CD14-positive monocyte (primary cell): ENCODE measurements at regions of chr1 and their contacts with region 1.

Region 1: GRCh38 chr1:42335050-42335808 is at the start of gene FOXJ3:
- DNase-seq: peak; percentile 84 to 94 (median 90)
- H3K4me3 ChIP-seq: peak within 1 kb of the TSS; percentile 67 to 95 (median 90)
- H3K4me3 Mint-ChIP-seq: peak within 1 kb of the TSS; percentile 90 to 95
- H3K27ac ChIP-seq: peak within 1 kb of the TSS; percentile 66 to 86
- H3K27ac Mint-ChIP-seq: peak within 1 kb of the TSS; percentile 76 to 95 (median 89)
- H3K4me1 ChIP-seq: peaks cover 20 to 28% of the 10 kb centered on the region in 2 donors
- H3K4me1 Mint-ChIP-seq: peaks cover 38% of the 10 kb centered on the region
- H3K27me3 ChIP-seq: no peaks in the 10 kb centered on the region
- H3K27me3 Mint-ChIP-seq: peaks cover 0 to 4% (median 2%) of the 10 kb centered on the region in 3 donors
- CTCF ChIP-seq: no peak
- polyA plus RNA-seq, gene FOXJ3: 10.2 to 18.5 (median 18.4) TPM

Region 2: DNA sequence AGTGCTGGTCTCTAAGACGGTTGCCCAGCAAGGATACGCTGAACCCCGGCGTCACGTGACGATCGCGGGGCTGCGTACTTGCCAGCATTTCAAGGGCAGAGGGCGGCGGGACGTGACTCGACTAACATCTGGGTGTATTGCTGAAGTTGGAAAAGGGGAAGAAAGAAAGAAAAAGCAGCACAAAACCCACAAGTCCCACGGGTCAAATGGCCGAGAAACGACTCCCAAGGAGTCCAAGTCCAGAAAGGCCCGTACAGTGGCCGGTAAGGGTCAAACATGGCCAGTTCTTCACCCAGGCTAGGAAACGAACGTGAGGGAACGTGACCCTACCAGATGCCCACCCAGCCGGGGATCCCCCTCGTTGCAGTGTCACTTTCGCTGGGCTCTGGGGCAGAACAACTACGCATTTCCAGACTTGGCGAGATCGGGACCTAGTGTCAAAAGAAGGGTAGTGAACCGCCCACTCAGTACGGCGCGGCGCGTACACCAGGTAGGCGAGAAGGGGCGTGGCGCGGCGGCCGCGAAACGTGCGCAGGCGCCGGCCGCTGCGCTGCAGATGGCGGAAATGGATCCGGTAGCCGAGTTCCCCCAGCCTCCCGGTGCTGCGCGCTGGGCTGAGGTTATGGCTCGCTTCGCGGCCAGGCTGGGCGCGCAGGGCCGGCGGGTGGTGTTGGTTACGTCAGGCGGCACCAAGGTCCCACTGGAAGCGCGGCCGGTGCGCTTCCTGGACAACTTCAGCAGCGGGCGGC is 121.0 kb after region 1 on chr1 and contains the starts of genes PPCS and ZMYND12:
- intact Hi-C with region 1: loop called (anchors 2 to 10 kb)
- DNase-seq: peak; percentile 77 to 89 (median 86)
- H3K4me3 ChIP-seq: peak within 1 kb of the TSS; percentile 64 to 91 (median 89)
- H3K4me3 Mint-ChIP-seq: peak within 1 kb of the TSS; percentile 92 to 96
- H3K27ac ChIP-seq: peak within 1 kb of the TSS; percentile 74 to 92
- H3K27ac Mint-ChIP-seq: peak within 1 kb of the TSS; percentile 93 to 98 (median 95)
- H3K4me1 ChIP-seq: peaks cover 14 to 28% of the 10 kb centered on the region in 2 donors
- H3K4me1 Mint-ChIP-seq: peaks cover 22% of the 10 kb centered on the region
- H3K27me3 ChIP-seq: no peaks in the 10 kb centered on the region
- H3K27me3 Mint-ChIP-seq: peaks cover 0 to 1% (median 0%) of the 10 kb centered on the region in 3 donors
- CTCF ChIP-seq: no peak
- polyA plus RNA-seq, gene PPCS: 43.2 to 182 (median 176) TPM
- polyA plus RNA-seq, gene ZMYND12: 0.76 to 1.3 (median 1.2) TPM

Region 3: DNA sequence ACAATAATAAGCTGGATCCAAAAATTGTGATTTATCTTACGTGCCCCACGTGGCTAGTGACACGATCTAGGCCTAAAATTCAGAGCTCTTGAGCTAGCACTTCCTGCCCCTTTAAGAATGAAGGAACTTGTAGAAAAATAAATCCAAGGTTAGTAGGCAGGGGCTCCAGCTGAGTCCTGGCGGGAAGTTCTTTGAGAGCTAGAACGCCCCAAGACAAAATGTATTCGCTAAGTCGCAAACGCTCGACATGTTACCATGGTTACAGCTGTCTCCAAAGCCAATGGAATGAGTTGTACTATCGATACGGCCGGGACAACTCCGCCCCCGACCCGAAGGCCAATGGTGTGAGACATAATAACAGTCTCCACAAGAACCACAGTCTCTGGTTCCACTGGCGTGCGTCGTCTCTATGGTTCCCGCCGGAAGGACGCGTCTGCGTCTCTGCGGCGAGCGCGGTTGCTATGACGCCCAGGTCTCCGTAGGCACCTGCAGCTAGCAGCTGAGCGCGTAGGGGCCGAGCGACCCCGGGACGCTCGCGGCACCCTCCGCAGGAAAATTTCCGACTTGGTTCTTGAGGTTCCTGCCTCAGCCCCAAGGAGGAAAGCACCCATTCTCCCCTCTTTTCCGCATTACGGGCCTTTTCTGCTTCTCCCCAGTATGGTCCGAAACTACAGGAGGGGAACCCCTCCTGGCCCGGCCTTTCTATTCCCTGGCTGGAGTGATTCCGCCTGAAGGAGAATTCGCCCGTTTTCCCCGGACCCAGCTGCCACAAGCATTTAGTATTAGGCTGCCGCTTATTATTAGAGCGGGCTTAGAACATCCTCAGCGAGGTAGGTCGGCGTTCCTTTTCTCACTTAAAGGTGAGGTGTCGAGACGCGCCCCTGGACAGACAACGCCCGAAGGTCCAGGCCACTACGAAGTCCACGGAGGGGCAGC is 127.9 kb after region 1 on chr1 and contains the start of gene CCDC30:
- intact Hi-C with region 1: loop called in 1 of 2 experiments (anchors 10 kb)
- DNase-seq: peak; percentile 89 to 95 (median 94)
- H3K4me3 ChIP-seq: peak within 1 kb of the TSS; percentile 37 to 73 (median 68)
- H3K4me3 Mint-ChIP-seq: peak within 1 kb of the TSS; percentile 83 to 91
- H3K27ac ChIP-seq: peak within 1 kb of the TSS; percentile 20 to 34
- H3K27ac Mint-ChIP-seq: peak within 1 kb of the TSS in 6 of 7 donors; percentile 68 to 85 (median 82)
- H3K4me1 ChIP-seq: peaks cover 16 to 18% of the 10 kb centered on the region in 2 donors
- H3K4me1 Mint-ChIP-seq: peaks cover 28% of the 10 kb centered on the region
- H3K27me3 ChIP-seq: no peaks in the 10 kb centered on the region
- H3K27me3 Mint-ChIP-seq: peaks cover 0 to 2% (median 1%) of the 10 kb centered on the region in 3 donors
- CTCF ChIP-seq: no peak
- polyA plus RNA-seq, gene CCDC30: 0.95 to 1.5 (median 1.2) TPM

Region 4: GRCh38 chr1:42657971-42658879 is 323.0 kb after region 1 on chr1 and contains the start of gene PPIH:
- intact Hi-C with region 1: loop called in 1 of 2 experiments (anchors 10 kb)
- DNase-seq: peak; percentile 88 to 93 (median 89)
- H3K4me3 ChIP-seq: peak within 1 kb of the TSS; percentile 78 to 89 (median 84)
- H3K4me3 Mint-ChIP-seq: peak within 1 kb of the TSS; percentile 93 to 98
- H3K27ac ChIP-seq: peak within 1 kb of the TSS; percentile 57 to 82
- H3K27ac Mint-ChIP-seq: peak within 1 kb of the TSS; percentile 90 to 97 (median 91)
- H3K4me1 ChIP-seq: peaks cover 15 to 18% of the 10 kb centered on the region in 2 donors
- H3K4me1 Mint-ChIP-seq: peaks cover 20% of the 10 kb centered on the region
- H3K27me3 ChIP-seq: no peaks in the 10 kb centered on the region
- H3K27me3 Mint-ChIP-seq: peaks cover 0 to 5% (median 4%) of the 10 kb centered on the region in 3 donors
- CTCF ChIP-seq: no peak
- polyA plus RNA-seq, gene PPIH: 28.1 to 31.0 (median 28.8) TPM

Region 5: DNA sequence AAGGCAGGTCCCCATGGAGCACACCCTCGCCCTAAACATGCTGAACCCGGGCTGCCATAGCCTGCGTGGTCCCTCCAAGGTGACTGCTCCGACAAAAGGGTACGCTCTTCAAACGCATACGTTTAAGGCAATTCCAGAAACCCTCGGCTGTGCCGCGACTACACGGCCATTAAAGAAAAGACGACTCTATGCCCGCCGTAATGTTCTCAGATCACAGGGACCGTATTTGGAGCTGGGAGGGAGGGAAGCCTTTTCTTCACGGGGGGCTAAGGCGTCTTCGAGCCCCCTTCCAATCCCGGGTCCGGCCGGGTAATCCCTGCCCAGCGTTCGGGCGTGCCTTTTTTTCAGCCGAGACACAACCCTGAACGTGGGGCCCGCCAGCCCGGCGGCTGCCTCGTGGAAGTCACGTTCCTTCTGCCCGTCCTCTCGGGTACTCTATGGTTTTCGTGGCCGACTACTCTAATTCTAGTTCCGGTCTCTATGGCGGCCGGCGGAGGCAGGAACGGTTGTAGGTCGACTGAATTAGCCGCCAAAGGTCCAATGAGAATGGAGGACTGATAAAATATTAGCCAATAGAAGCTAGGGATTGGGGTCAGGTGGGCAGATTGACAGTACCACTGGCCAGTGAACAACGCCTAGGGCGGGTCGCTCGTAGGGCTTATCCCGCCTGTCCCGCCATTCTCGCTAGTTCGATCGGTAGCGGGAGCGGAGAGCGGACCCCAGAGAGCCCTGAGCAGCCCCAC is 346.7 kb after region 1 on chr1 and contains the start of gene YBX1:
- intact Hi-C with region 1: loop called in 1 of 2 experiments (anchors 10 kb)
- DNase-seq: peak; percentile 97 to 99 (median 97)
- H3K4me3 ChIP-seq: peak within 1 kb of the TSS; percentile 58 to 95 (median 85)
- H3K4me3 Mint-ChIP-seq: peak within 1 kb of the TSS; percentile 91 to 94
- H3K27ac ChIP-seq: peak within 1 kb of the TSS; percentile 78 to 92
- H3K27ac Mint-ChIP-seq: peak within 1 kb of the TSS; percentile 91 to 98 (median 96)
- H3K4me1 ChIP-seq: peaks cover 36 to 50% of the 10 kb centered on the region in 2 donors
- H3K4me1 Mint-ChIP-seq: peaks cover 49% of the 10 kb centered on the region
- H3K27me3 ChIP-seq: no peaks in the 10 kb centered on the region
- H3K27me3 Mint-ChIP-seq: no peaks in the 10 kb centered on the region
- CTCF ChIP-seq: no peak
- polyA plus RNA-seq, gene YBX1: 65.7 to 301 (median 70.2) TPM

Region 6: GRCh38 chr1:42747125-42747524 is 411.9 kb after region 1 on chr1:
- intact Hi-C with region 1: loop called in 1 of 2 experiments (anchors 10 kb)
- DNase-seq: peak in 2 of 3 donors; percentile 7 to 9
- H3K4me3 ChIP-seq: no peak overlapping the region
- H3K4me3 Mint-ChIP-seq: no peak overlapping the region
- H3K27ac ChIP-seq: peak overlapping the region in 1 of 2 donors; percentile 72
- H3K27ac Mint-ChIP-seq: peak overlapping the region in 2 of 7 donors; percentile 19 to 41
- H3K4me1 ChIP-seq: peaks cover 18% of the 10 kb centered on the region in 2 donors
- H3K4me1 Mint-ChIP-seq: peaks cover 28% of the 10 kb centered on the region
- H3K27me3 ChIP-seq: no peaks in the 10 kb centered on the region
- H3K27me3 Mint-ChIP-seq: peaks cover 0 to 6% (median 2%) of the 10 kb centered on the region in 3 donors
- CTCF ChIP-seq: peak; percentile 61

Region 7: DNA sequence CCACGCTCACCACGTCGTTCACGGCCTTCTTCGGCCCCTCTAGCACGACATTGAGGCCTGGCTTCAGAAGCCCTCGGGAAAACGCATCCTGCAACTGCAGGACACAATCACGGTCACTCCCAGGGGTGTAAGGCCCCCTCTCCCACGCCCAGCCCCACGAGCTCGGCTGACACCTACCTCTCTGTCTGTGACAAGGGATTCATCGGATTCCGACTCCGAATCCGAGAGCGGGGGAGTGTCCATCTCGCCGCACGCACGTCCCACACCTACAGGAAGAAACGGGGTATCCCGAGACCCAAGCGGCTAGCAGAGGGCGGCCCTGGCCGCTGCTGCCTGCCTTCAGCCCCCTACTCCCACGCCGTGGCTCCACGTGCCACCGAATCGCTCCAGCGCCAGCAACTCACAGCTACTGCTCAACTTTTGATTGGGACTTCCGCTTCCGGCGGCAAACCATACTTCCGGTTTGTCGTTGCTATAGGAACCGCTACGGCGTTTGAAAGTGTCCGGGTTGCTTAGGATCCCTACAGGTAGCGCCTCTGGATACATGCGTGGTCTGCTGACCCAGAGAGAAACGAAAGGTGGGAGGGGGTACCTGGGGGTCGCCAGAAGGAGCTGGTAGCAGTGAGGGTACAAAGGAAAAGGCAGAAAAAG is 836.8 kb after region 1 on chr1 and contains the starts of genes CFAP57 and EBNA1BP2:
- intact Hi-C with region 1: loop called in 1 of 2 experiments (anchors 2 kb)
- DNase-seq: peak; percentile 95
- H3K4me3 ChIP-seq: peak within 1 kb of the TSS; percentile 62 to 98 (median 80)
- H3K4me3 Mint-ChIP-seq: peak within 1 kb of the TSS; percentile 94 to 96
- H3K27ac ChIP-seq: peak within 1 kb of the TSS in 1 of 2 donors; percentile 71
- H3K27ac Mint-ChIP-seq: peak within 1 kb of the TSS; percentile 71 to 97 (median 95)
- H3K4me1 ChIP-seq: peaks cover 9 to 16% of the 10 kb centered on the region in 2 donors
- H3K4me1 Mint-ChIP-seq: peaks cover 17% of the 10 kb centered on the region
- H3K27me3 ChIP-seq: peaks cover 0 to 23% of the 10 kb centered on the region in 2 donors
- H3K27me3 Mint-ChIP-seq: peaks cover 5 to 17% (median 13%) of the 10 kb centered on the region in 3 donors
- CTCF ChIP-seq: no peak
- polyA plus RNA-seq, gene CFAP57: 0.01 to 0.05 TPM in 2 of 3 donors, not detected in the other
- polyA plus RNA-seq, gene EBNA1BP2: 10.2 to 37.2 (median 30.9) TPM

Region 8: GRCh38 chr1:43267291-43267805 is 932.1 kb after region 1 on chr1:
- intact Hi-C with region 1: no loop called
- DNase-seq: no peak
- H3K4me3 ChIP-seq: no peak overlapping the region
- H3K4me3 Mint-ChIP-seq: no peak overlapping the region
- H3K27ac ChIP-seq: no peak overlapping the region
- H3K27ac Mint-ChIP-seq: no peak overlapping the region
- H3K4me1 ChIP-seq: peaks cover 8 to 12% of the 10 kb centered on the region in 2 donors
- H3K4me1 Mint-ChIP-seq: peaks cover 14% of the 10 kb centered on the region
- H3K27me3 ChIP-seq: no peaks in the 10 kb centered on the region
- H3K27me3 Mint-ChIP-seq: peaks cover 2 to 11% (median 9%) of the 10 kb centered on the region in 3 donors
- CTCF ChIP-seq: no peak